Posterior vena cava (tissue), 2 donors: ENCODE measurements at regions of chr2 and their contacts with region 1.

Region 1: GRCh38 chr2:27890146-27890923 is at the starts of genes BABAM2 and RBKS:
- DNase-seq: peak; percentile 96
- total RNA-seq, gene BABAM2: 39.1 to 43.1 TPM
- total RNA-seq, gene RBKS: 1.5 TPM

Region 2: DNA sequence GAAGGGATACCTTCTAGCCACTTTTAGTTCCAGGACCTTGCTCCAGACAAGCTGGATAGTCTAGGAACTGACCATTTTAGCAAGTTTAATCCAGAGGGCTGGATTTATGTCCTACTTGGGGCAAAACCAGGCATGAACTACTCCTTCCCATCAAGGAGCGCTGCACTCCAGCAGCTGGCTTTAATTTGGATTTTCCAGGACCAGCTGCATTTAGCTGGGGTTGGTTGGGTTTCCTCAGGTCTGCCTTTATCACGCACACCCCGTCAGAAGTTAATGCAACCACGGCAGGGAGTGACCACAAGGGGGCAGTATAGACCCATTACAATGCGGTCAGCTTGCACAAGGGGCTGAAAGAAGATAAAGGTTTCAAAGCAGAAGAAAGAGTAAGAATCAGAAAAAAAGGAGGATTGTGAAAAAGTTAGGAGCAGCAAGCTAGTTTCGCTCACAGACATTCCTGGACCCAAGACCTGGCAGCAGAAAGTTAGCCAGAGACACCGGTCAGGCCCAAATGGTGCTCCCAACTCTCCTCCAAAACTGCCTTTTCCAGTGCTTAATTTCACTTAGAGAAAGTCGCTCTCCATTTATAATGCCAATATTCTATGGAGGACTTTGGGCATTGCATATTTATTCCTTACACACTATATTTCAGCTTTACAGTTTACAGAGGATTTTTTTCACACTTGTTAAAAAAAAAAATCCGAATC is 186.5 kb before region 1 on chr2:
- intact Hi-C with region 1: loop called in 1 of 2 experiments (anchors 10 kb)
- DNase-seq: peak; percentile 91

Region 3: GRCh38 chr2:27807476-27807875 is 82.9 kb before region 1 on chr2:
- intact Hi-C with region 1: loop called in 1 of 2 experiments (anchors 10 kb)
- DNase-seq: no peak

Region 4: GRCh38 chr2:28082131-28082530 is 191.8 kb after region 1 on chr2:
- intact Hi-C with region 1: no loop called
- DNase-seq: no peak

Region 5: GRCh38 chr2:28392297-28393113 is 502.2 kb after region 1 on chr2 and contains the start of gene FOSL2:
- intact Hi-C with region 1: loop called (anchors 5 to 10 kb)
- DNase-seq: peak; percentile 98
- total RNA-seq, gene FOSL2: 105 to 141 TPM